ENCODE measurements at regions of chr18 and their contacts with region 1.

Region 1: GRCh38 chr18:37341473-37342086 is 224.0 kb downstream of the CELF4 start:
- DNase-seq: no peak
- H3K4me3 Mint-ChIP-seq: no peak overlapping the region
- H3K27ac Mint-ChIP-seq: no peak overlapping the region
- H3K4me1 Mint-ChIP-seq: no peaks in the 10 kb centered on the region
- H3K27me3 Mint-ChIP-seq: peaks cover 2% of the 10 kb centered on the region

Region 2: DNA sequence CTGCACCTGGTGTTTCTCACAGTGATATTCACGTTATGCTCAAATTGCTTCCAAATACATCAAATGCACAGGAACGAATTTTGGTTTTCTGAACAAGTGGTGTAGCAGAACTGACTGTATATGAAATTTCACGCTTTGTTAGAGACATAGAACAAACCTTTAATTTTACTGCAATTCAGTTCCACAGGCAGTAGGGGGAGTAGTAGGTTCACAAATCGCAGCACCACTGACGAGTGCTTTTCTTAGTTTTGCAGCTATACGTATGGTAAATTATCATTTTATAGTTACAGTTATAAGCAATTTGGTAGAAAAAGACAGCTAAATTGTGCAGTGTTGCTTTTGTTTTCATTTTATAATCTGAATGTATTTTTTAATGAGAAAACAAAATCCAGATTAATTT is 399.3 kb before region 1 on chr18:
- intact Hi-C with region 1: loop called (anchors 2 kb)
- DNase-seq: peak; percentile 1
- H3K4me3 Mint-ChIP-seq: no peak overlapping the region
- H3K27ac Mint-ChIP-seq: no peak overlapping the region
- H3K4me1 Mint-ChIP-seq: no peaks in the 10 kb centered on the region
- H3K27me3 Mint-ChIP-seq: no peaks in the 10 kb centered on the region